Naive thymus-derived CD4-positive, alpha-beta T cell (primary cell): ENCODE measurements at regions of chrX and their contacts with region 1.

Region 1: GRCh38 chrX:129606918-129607317 is 47.8 kb downstream of the APLN start:
- DNase-seq: peak in 8 of 9 donors; percentile 29 to 63 (median 54)
- ATAC-seq: peak; percentile 75
- H3K4me3 ChIP-seq: no peak overlapping the region
- H3K4me3 Mint-ChIP-seq: no peak overlapping the region
- H3K27ac ChIP-seq: no peak overlapping the region
- H3K27ac Mint-ChIP-seq: peak overlapping the region in 1 of 9 donors; percentile 84
- H3K4me1 ChIP-seq: peaks cover 5 to 7% of the 10 kb centered on the region in 2 donors
- H3K4me1 Mint-ChIP-seq: peaks cover 4 to 35% (median 16%) of the 10 kb centered on the region in 7 donors
- H3K27me3 ChIP-seq: no peaks in the 10 kb centered on the region
- H3K27me3 Mint-ChIP-seq: no peaks in the 10 kb centered on the region

Region 2: GRCh38 chrX:129759576-129760061 is 152.7 kb after region 1 on chrX:
- CTCF ChIA-PET with region 1: no interaction called
- POLR2A ChIA-PET with region 1: no interaction called
- intact Hi-C with region 1: loop called in 1 of 2 experiments (anchors 10 kb)
- DNase-seq: peak in 8 of 9 donors; percentile 40 to 69 (median 59)
- ATAC-seq: peak; percentile 85
- H3K4me3 ChIP-seq: no peak overlapping the region
- H3K4me3 Mint-ChIP-seq: peak overlapping the region; percentile 8 to 64 (median 51)
- H3K27ac ChIP-seq: no peak overlapping the region
- H3K27ac Mint-ChIP-seq: peak overlapping the region in 7 of 9 donors; percentile 10 to 90 (median 31)
- H3K4me1 ChIP-seq: peaks cover 50 to 55% of the 10 kb centered on the region in 2 donors
- H3K4me1 Mint-ChIP-seq: peaks cover 16 to 67% (median 59%) of the 10 kb centered on the region in 7 donors
- H3K27me3 ChIP-seq: no peaks in the 10 kb centered on the region
- H3K27me3 Mint-ChIP-seq: no peaks in the 10 kb centered on the region

Region 3: GRCh38 chrX:129905787-129906580 is 299.1 kb after region 1 on chrX and contains the start of gene UTP14A:
- CTCF ChIA-PET with region 1: no interaction called
- POLR2A ChIA-PET with region 1: no interaction called
- intact Hi-C with region 1: loop called (anchors 1 to 2 kb)
- DNase-seq: peak; percentile 44 to 86 (median 78)
- ATAC-seq: peak; percentile 98
- H3K4me3 ChIP-seq: peak within 1 kb of the TSS; percentile 85
- H3K4me3 Mint-ChIP-seq: peak within 1 kb of the TSS; percentile 85 to 97 (median 92)
- H3K27ac ChIP-seq: peak within 1 kb of the TSS; percentile 76
- H3K27ac Mint-ChIP-seq: peak within 1 kb of the TSS; percentile 81 to 95 (median 90)
- H3K4me1 ChIP-seq: peaks cover 3 to 8% of the 10 kb centered on the region in 2 donors
- H3K4me1 Mint-ChIP-seq: peaks cover 0 to 17% (median 4%) of the 10 kb centered on the region in 7 donors
- H3K27me3 ChIP-seq: no peaks in the 10 kb centered on the region
- H3K27me3 Mint-ChIP-seq: no peaks in the 10 kb centered on the region
- total RNA-seq, gene UTP14A: 11.3 to 28.6 (median 22.4) TPM

Region 4: GRCh38 chrX:129996120-129996519 is 389.2 kb after region 1 on chrX:
- CTCF ChIA-PET with region 1: no interaction called
- POLR2A ChIA-PET with region 1: no interaction called
- intact Hi-C with region 1: no loop called
- DNase-seq: no peak
- ATAC-seq: peak; percentile 70
- H3K4me3 ChIP-seq: no peak overlapping the region
- H3K4me3 Mint-ChIP-seq: no peak overlapping the region
- H3K27ac ChIP-seq: no peak overlapping the region
- H3K27ac Mint-ChIP-seq: no peak overlapping the region
- H3K4me1 ChIP-seq: no peaks in the 10 kb centered on the region
- H3K4me1 Mint-ChIP-seq: peaks cover 0 to 10% (median 6%) of the 10 kb centered on the region in 7 donors
- H3K27me3 ChIP-seq: no peaks in the 10 kb centered on the region
- H3K27me3 Mint-ChIP-seq: no peaks in the 10 kb centered on the region

Region 5: DNA sequence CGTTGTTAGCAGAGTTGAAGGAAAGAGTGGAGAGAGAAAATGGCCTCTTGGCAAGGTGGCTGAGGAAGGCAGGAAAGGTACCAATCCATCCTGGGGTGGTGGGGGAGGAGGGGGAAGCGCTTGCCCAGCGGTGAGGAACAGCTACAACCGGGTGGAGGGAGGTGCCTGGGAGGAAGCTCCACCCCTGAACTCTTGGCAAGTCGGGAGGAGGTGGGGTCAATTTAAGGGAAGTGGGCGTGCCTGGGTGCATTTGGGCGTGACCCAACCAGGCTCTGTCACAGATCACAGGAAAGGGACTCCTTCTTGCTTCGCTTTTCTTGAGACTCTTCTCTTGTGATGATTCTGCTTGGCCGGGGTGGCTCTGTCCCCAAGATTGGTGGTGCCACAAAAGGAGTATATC is 417.2 kb after region 1 on chrX:
- CTCF ChIA-PET with region 1: interaction called, 3 read pairs
- POLR2A ChIA-PET with region 1: no interaction called
- intact Hi-C with region 1: loop called (anchors 1 to 10 kb)
- DNase-seq: peak; percentile 42 to 86 (median 81)
- ATAC-seq: peak; percentile 100
- H3K4me3 ChIP-seq: no peak overlapping the region
- H3K4me3 Mint-ChIP-seq: peak overlapping the region in 7 of 10 donors; percentile 43 to 75 (median 50)
- H3K27ac ChIP-seq: peak overlapping the region; percentile 34
- H3K27ac Mint-ChIP-seq: peak overlapping the region; percentile 54 to 81 (median 76)
- H3K4me1 ChIP-seq: peaks cover 4 to 13% of the 10 kb centered on the region in 2 donors
- H3K4me1 Mint-ChIP-seq: peaks cover 0 to 19% (median 10%) of the 10 kb centered on the region in 7 donors
- H3K27me3 ChIP-seq: no peaks in the 10 kb centered on the region
- H3K27me3 Mint-ChIP-seq: no peaks in the 10 kb centered on the region

Region 6: DNA sequence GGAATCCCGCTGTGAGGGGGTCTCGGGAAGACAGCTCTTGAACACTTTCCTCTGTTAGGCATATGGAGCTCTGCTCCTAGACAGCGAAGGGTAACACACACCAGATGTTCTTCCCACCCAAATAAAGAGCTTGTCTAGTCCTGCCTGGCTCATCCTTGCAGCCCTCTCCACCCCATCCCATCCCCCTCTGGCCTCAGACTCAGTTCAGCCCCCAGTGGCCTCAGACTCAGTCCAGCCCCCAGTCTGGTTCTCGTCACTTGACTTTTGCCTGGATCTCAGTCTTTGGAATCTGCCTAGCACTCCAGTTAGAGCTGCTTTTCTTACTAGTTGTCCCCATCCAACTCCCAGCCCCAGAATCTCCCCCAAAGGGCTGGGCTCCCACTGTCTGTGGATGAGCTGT is 579.7 kb after region 1 on chrX:
- CTCF ChIA-PET with region 1: no interaction called
- POLR2A ChIA-PET with region 1: no interaction called
- intact Hi-C with region 1: loop called in 1 of 2 experiments (anchors 5 kb)
- DNase-seq: no peak
- ATAC-seq: no peak
- H3K4me3 ChIP-seq: no peak overlapping the region
- H3K4me3 Mint-ChIP-seq: no peak overlapping the region
- H3K27ac ChIP-seq: no peak overlapping the region
- H3K27ac Mint-ChIP-seq: peak overlapping the region in 1 of 9 donors; percentile 43
- H3K4me1 ChIP-seq: peaks cover 6 to 13% of the 10 kb centered on the region in 2 donors
- H3K4me1 Mint-ChIP-seq: peaks cover 3 to 26% (median 13%) of the 10 kb centered on the region in 7 donors
- H3K27me3 ChIP-seq: no peaks in the 10 kb centered on the region
- H3K27me3 Mint-ChIP-seq: no peaks in the 10 kb centered on the region

Region 7: DNA sequence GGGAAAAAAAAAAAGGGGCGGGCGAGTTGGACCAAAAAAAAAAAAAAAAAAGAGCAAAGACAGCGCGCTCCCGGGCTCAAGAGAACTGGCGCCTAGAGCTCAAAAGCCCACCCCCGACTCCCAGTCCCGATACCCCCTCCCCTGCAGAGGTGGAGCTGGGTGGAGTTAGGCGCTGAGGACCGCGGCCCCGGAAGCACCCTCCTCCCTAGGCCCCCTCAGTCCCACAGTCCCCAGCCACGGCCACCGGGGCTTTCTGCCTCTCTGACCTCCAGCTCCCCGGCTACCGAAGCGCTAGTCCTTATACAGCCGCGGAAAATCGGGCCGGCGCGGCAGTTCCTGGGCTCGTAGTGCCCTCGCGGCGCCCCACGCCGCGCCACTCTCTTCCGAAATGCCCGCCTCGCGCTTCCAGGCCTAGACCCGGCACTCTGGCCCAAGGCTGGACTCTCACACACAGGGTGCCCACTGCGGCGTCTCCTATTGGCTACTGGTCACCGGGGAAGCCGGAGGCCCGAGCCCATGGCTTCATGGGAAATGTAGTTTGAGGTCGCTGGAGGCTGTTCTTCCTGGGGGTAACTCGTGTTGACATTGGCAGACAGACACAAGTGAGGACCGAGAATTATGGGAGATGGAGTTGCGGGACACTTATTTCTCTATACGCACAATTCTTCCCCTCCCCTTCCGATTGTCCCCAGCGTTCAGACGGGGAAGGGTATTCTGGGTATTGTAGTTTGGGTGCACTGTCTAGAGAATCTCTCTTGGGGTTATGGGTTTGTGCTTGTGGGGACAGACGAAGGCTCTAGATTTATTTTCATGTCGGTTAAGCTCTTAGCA is 1296.1 kb after region 1 on chrX and contains the start of gene ENOX2:
- CTCF ChIA-PET with region 1: no interaction called
- POLR2A ChIA-PET with region 1: no interaction called
- intact Hi-C with region 1: loop called in 1 of 2 experiments (anchors 10 kb)
- DNase-seq: peak; percentile 51 to 90 (median 83)
- ATAC-seq: peak; percentile 98
- H3K4me3 ChIP-seq: peak within 1 kb of the TSS; percentile 79
- H3K4me3 Mint-ChIP-seq: no peak within 1 kb of the TSS
- H3K27ac ChIP-seq: peak within 1 kb of the TSS; percentile 93
- H3K27ac Mint-ChIP-seq: peak within 1 kb of the TSS in 6 of 9 donors; percentile 51 to 91 (median 71)
- H3K4me1 ChIP-seq: peaks cover 0 to 5% of the 10 kb centered on the region in 2 donors
- H3K4me1 Mint-ChIP-seq: peaks cover 5 to 14% (median 12%) of the 10 kb centered on the region in 7 donors
- H3K27me3 ChIP-seq: no peaks in the 10 kb centered on the region
- H3K27me3 Mint-ChIP-seq: no peaks in the 10 kb centered on the region
- total RNA-seq, gene ENOX2: 10.3 to 15.3 (median 12.1) TPM